ENCODE measurements at regions of chr19 and their contacts with region 1.

Region 1: DNA sequence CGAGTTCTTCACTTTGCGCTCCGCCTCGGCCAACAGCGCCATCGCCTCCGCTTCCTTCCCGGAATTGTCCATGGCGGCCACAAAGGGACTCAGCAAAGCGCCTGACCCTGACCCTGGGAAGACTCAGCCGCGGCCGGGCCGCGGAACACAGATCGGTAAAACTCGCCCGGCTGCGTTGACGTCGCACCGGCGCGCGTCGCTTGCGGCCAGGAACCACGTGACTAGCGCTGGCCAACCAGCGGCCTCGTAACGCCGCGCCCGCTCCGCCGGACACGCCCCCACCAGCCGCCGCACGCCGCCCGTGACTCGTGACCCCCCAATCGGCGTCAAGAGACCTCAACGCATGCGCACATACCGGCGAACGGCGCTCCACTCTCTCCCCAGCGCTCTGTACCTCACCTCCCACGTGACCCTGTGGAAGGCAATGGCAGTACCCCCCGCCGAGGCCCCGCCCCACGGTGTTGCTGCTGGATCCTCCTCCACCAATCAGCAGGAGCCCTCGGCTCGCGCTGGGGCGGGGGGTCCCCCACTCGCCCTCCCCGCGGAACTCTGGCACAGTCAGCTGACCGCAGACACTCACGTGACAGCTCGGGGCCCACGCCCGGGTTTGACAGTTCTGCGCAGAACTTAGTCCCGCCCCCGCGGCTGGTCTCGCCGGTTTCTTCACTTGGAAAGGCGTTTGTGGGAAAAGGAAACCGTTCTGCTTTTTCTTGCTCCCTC is at the start of gene NAPA:
- DNase-seq: peak; percentile 100
- ATAC-seq: peak; percentile 94
- H3K4me3 ChIP-seq: peak within 1 kb of the TSS; percentile 84 to 100
- H3K4me3 Mint-ChIP-seq: peak within 1 kb of the TSS; percentile 97
- H3K27ac ChIP-seq: peak within 1 kb of the TSS; percentile 93 to 100
- H3K27ac Mint-ChIP-seq: peak within 1 kb of the TSS; percentile 98
- H3K4me1 ChIP-seq: peaks cover 82% of the 10 kb centered on the region
- H3K4me1 Mint-ChIP-seq: peaks cover 88% of the 10 kb centered on the region
- H3K27me3 ChIP-seq: no peaks in the 10 kb centered on the region
- H3K27me3 Mint-ChIP-seq: no peaks in the 10 kb centered on the region
- CTCF ChIP-seq: no peak
- total RNA-seq, gene NAPA: 172 to 188 TPM

Region 2: GRCh38 chr19:47315125-47315821 is 199.8 kb before region 1 on chr19:
- CTCF ChIA-PET with region 1: no interaction called
- POLR2A ChIA-PET with region 1: no interaction called
- intact Hi-C with region 1: no loop called
- DNase-seq: peak in 1 of 9 experiments; percentile 47
- ATAC-seq: peak; percentile 31
- H3K4me3 ChIP-seq: no peak overlapping the region
- H3K4me3 Mint-ChIP-seq: no peak overlapping the region
- H3K27ac ChIP-seq: no peak overlapping the region
- H3K27ac Mint-ChIP-seq: no peak overlapping the region
- H3K4me1 ChIP-seq: no peaks in the 10 kb centered on the region
- H3K4me1 Mint-ChIP-seq: no peaks in the 10 kb centered on the region
- H3K27me3 ChIP-seq: peaks cover 0 to 3% of the 10 kb centered on the region in 2 experiments
- H3K27me3 Mint-ChIP-seq: peaks cover 18% of the 10 kb centered on the region
- CTCF ChIP-seq: no peak

Region 3: GRCh38 chr19:47348819-47349795 is 165.9 kb before region 1 on chr19 and contains the start of gene DHX34:
- CTCF ChIA-PET with region 1: no interaction called
- POLR2A ChIA-PET with region 1: no interaction called
- intact Hi-C with region 1: loop called in 1 of 2 experiments (anchors 1 kb)
- DNase-seq: peak; percentile 98 to 100 (median 99)
- ATAC-seq: peak; percentile 98
- H3K4me3 ChIP-seq: peak within 1 kb of the TSS; percentile 88 to 93
- H3K4me3 Mint-ChIP-seq: peak within 1 kb of the TSS; percentile 98
- H3K27ac ChIP-seq: peak within 1 kb of the TSS; percentile 71 to 72
- H3K27ac Mint-ChIP-seq: peak within 1 kb of the TSS; percentile 91
- H3K4me1 ChIP-seq: peaks cover 25% of the 10 kb centered on the region
- H3K4me1 Mint-ChIP-seq: peaks cover 38% of the 10 kb centered on the region
- H3K27me3 ChIP-seq: no peaks in the 10 kb centered on the region
- H3K27me3 Mint-ChIP-seq: peaks cover 3% of the 10 kb centered on the region
- CTCF ChIP-seq: peak; percentile 72
- total RNA-seq, gene DHX34: 7.7 to 8.1 TPM

Region 4: GRCh38 chr19:47483800-47484690 is 31.0 kb before region 1 on chr19 and contains the start of gene KPTN:
- CTCF ChIA-PET with region 1: interaction called, 14 read pairs
- POLR2A ChIA-PET with region 1: interaction called, 6 read pairs
- intact Hi-C with region 1: loop called (anchors 1 kb)
- DNase-seq: peak; percentile 76 to 94 (median 87)
- ATAC-seq: peak; percentile 81
- H3K4me3 ChIP-seq: peak within 1 kb of the TSS; percentile 72 to 74
- H3K4me3 Mint-ChIP-seq: peak within 1 kb of the TSS; percentile 98
- H3K27ac ChIP-seq: peak within 1 kb of the TSS; percentile 75 to 94
- H3K27ac Mint-ChIP-seq: peak within 1 kb of the TSS; percentile 98
- H3K4me1 ChIP-seq: peaks cover 38% of the 10 kb centered on the region
- H3K4me1 Mint-ChIP-seq: peaks cover 45% of the 10 kb centered on the region
- H3K27me3 ChIP-seq: no peaks in the 10 kb centered on the region
- H3K27me3 Mint-ChIP-seq: no peaks in the 10 kb centered on the region
- CTCF ChIP-seq: peak; percentile 69
- total RNA-seq, gene KPTN: 5.4 to 5.9 TPM

Region 5: GRCh38 chr19:47540728-47541127 is 25.7 kb after region 1 on chr19:
- CTCF ChIA-PET with region 1: interaction called, 6 read pairs
- POLR2A ChIA-PET with region 1: interaction called, 3 read pairs
- intact Hi-C with region 1: loop called (anchors 1 kb)
- DNase-seq: peak in 2 of 9 experiments; percentile 42 to 63
- ATAC-seq: no peak
- H3K4me3 ChIP-seq: no peak overlapping the region
- H3K4me3 Mint-ChIP-seq: no peak overlapping the region
- H3K27ac ChIP-seq: peak overlapping the region in 1 of 2 experiments; percentile 65
- H3K27ac Mint-ChIP-seq: peak overlapping the region; percentile 90
- H3K4me1 ChIP-seq: peaks cover 25% of the 10 kb centered on the region
- H3K4me1 Mint-ChIP-seq: peaks cover 21% of the 10 kb centered on the region
- H3K27me3 ChIP-seq: peaks cover 0 to 11% of the 10 kb centered on the region in 2 experiments
- H3K27me3 Mint-ChIP-seq: peaks cover 6% of the 10 kb centered on the region
- CTCF ChIP-seq: no peak

Region 6: GRCh38 chr19:47600246-47601179 is 85.5 kb after region 1 on chr19:
- CTCF ChIA-PET with region 1: interaction called, 10 read pairs
- POLR2A ChIA-PET with region 1: interaction called, 24 read pairs
- intact Hi-C with region 1: loop called (anchors 1 kb)
- DNase-seq: peak; percentile 99 to 100 (median 100)
- ATAC-seq: peak; percentile 97
- H3K4me3 ChIP-seq: peak overlapping the region; percentile 77 to 93
- H3K4me3 Mint-ChIP-seq: peak overlapping the region; percentile 82
- H3K27ac ChIP-seq: peak overlapping the region; percentile 80 to 83
- H3K27ac Mint-ChIP-seq: peak overlapping the region; percentile 81
- H3K4me1 ChIP-seq: peaks cover 10% of the 10 kb centered on the region
- H3K4me1 Mint-ChIP-seq: peaks cover 26% of the 10 kb centered on the region
- H3K27me3 ChIP-seq: no peaks in the 10 kb centered on the region
- H3K27me3 Mint-ChIP-seq: no peaks in the 10 kb centered on the region
- CTCF ChIP-seq: no peak

Region 7: GRCh38 chr19:47707135-47707925 is 192.3 kb after region 1 on chr19:
- CTCF ChIA-PET with region 1: interaction called, 12 read pairs
- POLR2A ChIA-PET with region 1: no interaction called
- intact Hi-C with region 1: loop called in 1 of 2 experiments (anchors 10 kb)
- DNase-seq: peak; percentile 49 to 83 (median 74)
- ATAC-seq: peak; percentile 94
- H3K4me3 ChIP-seq: no peak overlapping the region
- H3K4me3 Mint-ChIP-seq: no peak overlapping the region
- H3K27ac ChIP-seq: no peak overlapping the region
- H3K27ac Mint-ChIP-seq: no peak overlapping the region
- H3K4me1 ChIP-seq: no peaks in the 10 kb centered on the region
- H3K4me1 Mint-ChIP-seq: peaks cover 2% of the 10 kb centered on the region
- H3K27me3 ChIP-seq: peaks cover 4 to 7% of the 10 kb centered on the region in 2 experiments
- H3K27me3 Mint-ChIP-seq: peaks cover 16% of the 10 kb centered on the region
- CTCF ChIP-seq: peak; percentile 72

Region 8: GRCh38 chr19:47726467-47726866 is 211.4 kb after region 1 on chr19:
- CTCF ChIA-PET with region 1: no interaction called
- POLR2A ChIA-PET with region 1: no interaction called
- intact Hi-C with region 1: no loop called
- DNase-seq: no peak
- ATAC-seq: no peak
- H3K4me3 ChIP-seq: no peak overlapping the region
- H3K4me3 Mint-ChIP-seq: no peak overlapping the region
- H3K27ac ChIP-seq: no peak overlapping the region
- H3K27ac Mint-ChIP-seq: no peak overlapping the region
- H3K4me1 ChIP-seq: peaks cover 15% of the 10 kb centered on the region
- H3K4me1 Mint-ChIP-seq: peaks cover 17% of the 10 kb centered on the region
- H3K27me3 ChIP-seq: peaks cover 3 to 21% of the 10 kb centered on the region in 2 experiments
- H3K27me3 Mint-ChIP-seq: peaks cover 36% of the 10 kb centered on the region
- CTCF ChIP-seq: no peak

Region 9: GRCh38 chr19:47778089-47778953 is 263.3 kb after region 1 on chr19 and contains the start of gene SELENOW:
- CTCF ChIA-PET with region 1: no interaction called
- POLR2A ChIA-PET with region 1: no interaction called
- intact Hi-C with region 1: loop called in 1 of 2 experiments (anchors 1 kb)
- DNase-seq: peak; percentile 55 to 91 (median 76)
- ATAC-seq: peak; percentile 93
- H3K4me3 ChIP-seq: peak within 1 kb of the TSS; percentile 81 to 95
- H3K4me3 Mint-ChIP-seq: peak within 1 kb of the TSS; percentile 93
- H3K27ac ChIP-seq: peak within 1 kb of the TSS; percentile 87 to 99
- H3K27ac Mint-ChIP-seq: peak within 1 kb of the TSS; percentile 94
- H3K4me1 ChIP-seq: peaks cover 22% of the 10 kb centered on the region
- H3K4me1 Mint-ChIP-seq: peaks cover 25% of the 10 kb centered on the region
- H3K27me3 ChIP-seq: no peaks in the 10 kb centered on the region
- H3K27me3 Mint-ChIP-seq: no peaks in the 10 kb centered on the region
- CTCF ChIP-seq: no peak
- total RNA-seq, gene SELENOW: 64.9 to 68.1 TPM

Measured in CD8-positive, alpha-beta T cell (primary cell).